MCF 10A (cell line): ENCODE measurements at regions of chr15 and their contacts with region 1.

Region 1: DNA sequence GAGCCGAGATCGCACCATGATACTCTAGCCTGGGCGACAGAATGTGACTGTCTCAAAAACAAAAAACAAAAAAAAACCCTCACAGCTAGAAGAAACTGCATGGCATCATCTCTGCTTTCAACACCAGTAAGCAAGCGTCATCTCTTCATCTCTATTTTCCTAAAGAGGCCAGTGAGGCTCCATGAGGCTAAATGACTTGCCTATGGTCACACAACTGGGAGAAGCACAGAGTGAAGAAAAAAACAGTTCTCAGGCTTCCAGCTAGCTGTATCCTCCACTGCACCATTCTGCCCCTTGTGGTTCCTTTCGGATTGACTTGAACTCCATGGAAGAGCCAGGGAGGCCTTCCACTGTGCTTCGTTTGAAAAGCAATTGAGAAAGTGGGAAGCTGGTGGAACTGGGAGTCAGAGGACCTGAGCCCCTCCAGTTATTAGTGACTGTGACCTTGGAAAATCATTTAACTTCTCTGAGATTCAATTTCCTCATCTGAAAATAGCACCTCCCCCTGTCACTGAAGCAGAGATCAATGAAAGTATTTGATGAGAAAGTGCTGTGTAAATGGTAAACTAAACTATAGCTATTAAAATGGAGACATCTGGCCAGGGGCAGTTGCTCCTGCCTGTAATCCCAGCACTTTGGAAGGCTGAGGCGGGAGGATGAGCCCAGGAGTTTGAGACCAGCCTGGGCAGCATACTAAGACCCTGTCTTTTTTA is 32.1 kb upstream of the DENND4A start:
- DNase-seq: peak; percentile 76
- H3K4me3 Mint-ChIP-seq: no peak overlapping the region
- H3K27ac Mint-ChIP-seq: no peak overlapping the region
- H3K4me1 Mint-ChIP-seq: peaks cover 4% of the 10 kb centered on the region
- H3K27me3 Mint-ChIP-seq: no peaks in the 10 kb centered on the region
- CTCF ChIP-seq: peak; percentile 31

Region 2: GRCh38 chr15:65571971-65572370 is 252.2 kb before region 1 on chr15:
- CTCF ChIA-PET with region 1: no interaction called
- POLR2A ChIA-PET with region 1: no interaction called
- intact Hi-C with region 1: no loop called
- DNase-seq: no peak
- H3K4me3 Mint-ChIP-seq: no peak overlapping the region
- H3K27ac Mint-ChIP-seq: no peak overlapping the region
- H3K4me1 Mint-ChIP-seq: no peaks in the 10 kb centered on the region
- H3K27me3 Mint-ChIP-seq: no peaks in the 10 kb centered on the region
- CTCF ChIP-seq: no peak

Region 3: GRCh38 chr15:65730549-65731172 is 93.5 kb before region 1 on chr15:
- CTCF ChIA-PET with region 1: interaction called, 4 read pairs
- POLR2A ChIA-PET with region 1: interaction called, 5 read pairs
- intact Hi-C with region 1: loop called (anchors 10 kb)
- DNase-seq: peak; percentile 66
- H3K4me3 Mint-ChIP-seq: peak overlapping the region; percentile 38
- H3K27ac Mint-ChIP-seq: peak overlapping the region; percentile 84
- H3K4me1 Mint-ChIP-seq: peaks cover 17% of the 10 kb centered on the region
- H3K27me3 Mint-ChIP-seq: no peaks in the 10 kb centered on the region
- CTCF ChIP-seq: no peak

Region 4: GRCh38 chr15:66524838-66525237 is 700.7 kb after region 1 on chr15:
- CTCF ChIA-PET with region 1: no interaction called
- POLR2A ChIA-PET with region 1: no interaction called
- intact Hi-C with region 1: no loop called
- DNase-seq: no peak
- H3K4me3 Mint-ChIP-seq: no peak overlapping the region
- H3K27ac Mint-ChIP-seq: no peak overlapping the region
- H3K4me1 Mint-ChIP-seq: peaks cover 10% of the 10 kb centered on the region
- H3K27me3 Mint-ChIP-seq: no peaks in the 10 kb centered on the region
- CTCF ChIP-seq: no peak